ENCODE measurements at regions of chr22 and their contacts with region 1.

Region 1: DNA sequence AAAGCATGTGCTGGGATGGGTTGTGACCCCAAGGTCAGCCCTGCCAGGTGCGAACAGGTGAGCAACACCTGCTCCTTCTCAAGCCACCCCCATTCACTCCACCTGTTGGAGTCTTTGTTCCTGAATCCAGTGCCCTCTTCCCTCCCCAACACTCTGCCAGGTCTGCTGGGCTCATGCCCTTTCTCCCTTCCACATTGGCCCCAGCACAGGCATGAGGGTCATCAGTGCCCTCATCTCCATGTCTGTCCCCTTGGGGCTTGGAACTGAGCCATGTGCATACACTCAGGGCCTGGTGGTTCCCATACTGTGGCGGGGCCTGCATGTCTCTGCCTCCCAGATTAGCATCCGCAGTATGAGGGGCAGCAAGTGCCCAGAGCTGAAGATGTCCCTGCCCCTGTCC is 19.1 kb downstream of the RFPL2 start:
- DNase-seq: no peak
- H3K4me3 ChIP-seq: no peak overlapping the region
- H3K4me3 Mint-ChIP-seq: no peak overlapping the region
- H3K27ac ChIP-seq: no peak overlapping the region
- H3K27ac Mint-ChIP-seq: no peak overlapping the region
- H3K4me1 ChIP-seq: no peaks in the 10 kb centered on the region
- H3K4me1 Mint-ChIP-seq: no peaks in the 10 kb centered on the region
- H3K27me3 ChIP-seq: no peaks in the 10 kb centered on the region
- H3K27me3 Mint-ChIP-seq: peaks cover 2% of the 10 kb centered on the region in 2 donors

Region 2: GRCh38 chr22:32175115-32175514 is 10.7 kb before region 1 on chr22:
- CTCF ChIA-PET with region 1: no interaction called
- POLR2A ChIA-PET with region 1: no interaction called
- intact Hi-C with region 1: no loop called
- DNase-seq: no peak
- H3K4me3 ChIP-seq: no peak overlapping the region
- H3K4me3 Mint-ChIP-seq: peak overlapping the region in 4 of 8 donors; percentile 7 to 51 (median 38)
- H3K27ac ChIP-seq: no peak overlapping the region
- H3K27ac Mint-ChIP-seq: no peak overlapping the region
- H3K4me1 ChIP-seq: no peaks in the 10 kb centered on the region
- H3K4me1 Mint-ChIP-seq: peaks cover 0 to 9% (median 7%) of the 10 kb centered on the region in 4 donors
- H3K27me3 ChIP-seq: no peaks in the 10 kb centered on the region
- H3K27me3 Mint-ChIP-seq: peaks cover 17 to 28% of the 10 kb centered on the region in 2 donors

Region 3: DNA sequence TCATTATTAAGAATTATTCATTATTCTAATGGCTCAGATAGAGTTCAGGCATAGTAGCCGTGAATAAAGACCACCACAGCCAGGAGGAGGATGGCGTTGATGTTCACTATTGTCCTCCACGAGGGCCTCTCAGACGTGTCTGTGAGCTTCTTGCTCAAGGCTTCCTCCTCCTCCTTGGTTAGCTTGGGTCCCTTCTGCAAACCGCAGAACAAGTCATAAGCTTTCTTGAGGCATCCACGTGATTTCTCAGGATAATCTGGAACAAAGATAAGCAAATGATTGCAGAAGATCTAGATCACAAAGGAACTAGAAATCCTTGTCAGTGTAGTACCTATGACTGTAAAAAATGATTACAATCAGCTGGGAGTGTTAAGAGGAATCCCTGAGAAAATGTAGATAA is 32.6 kb after region 1 on chr22:
- CTCF ChIA-PET with region 1: interaction called, 3 read pairs
- POLR2A ChIA-PET with region 1: no interaction called
- intact Hi-C with region 1: loop called (anchors 1 kb)
- DNase-seq: no peak
- H3K4me3 ChIP-seq: no peak overlapping the region
- H3K4me3 Mint-ChIP-seq: no peak overlapping the region
- H3K27ac ChIP-seq: no peak overlapping the region
- H3K27ac Mint-ChIP-seq: no peak overlapping the region
- H3K4me1 ChIP-seq: no peaks in the 10 kb centered on the region
- H3K4me1 Mint-ChIP-seq: no peaks in the 10 kb centered on the region
- H3K27me3 ChIP-seq: no peaks in the 10 kb centered on the region
- H3K27me3 Mint-ChIP-seq: peaks cover 2 to 4% of the 10 kb centered on the region in 2 donors

Measured in CD4-positive, alpha-beta memory T cell (primary cell).